ENCODE measurements at regions of chr4 and their contacts with region 1.

Region 1: DNA sequence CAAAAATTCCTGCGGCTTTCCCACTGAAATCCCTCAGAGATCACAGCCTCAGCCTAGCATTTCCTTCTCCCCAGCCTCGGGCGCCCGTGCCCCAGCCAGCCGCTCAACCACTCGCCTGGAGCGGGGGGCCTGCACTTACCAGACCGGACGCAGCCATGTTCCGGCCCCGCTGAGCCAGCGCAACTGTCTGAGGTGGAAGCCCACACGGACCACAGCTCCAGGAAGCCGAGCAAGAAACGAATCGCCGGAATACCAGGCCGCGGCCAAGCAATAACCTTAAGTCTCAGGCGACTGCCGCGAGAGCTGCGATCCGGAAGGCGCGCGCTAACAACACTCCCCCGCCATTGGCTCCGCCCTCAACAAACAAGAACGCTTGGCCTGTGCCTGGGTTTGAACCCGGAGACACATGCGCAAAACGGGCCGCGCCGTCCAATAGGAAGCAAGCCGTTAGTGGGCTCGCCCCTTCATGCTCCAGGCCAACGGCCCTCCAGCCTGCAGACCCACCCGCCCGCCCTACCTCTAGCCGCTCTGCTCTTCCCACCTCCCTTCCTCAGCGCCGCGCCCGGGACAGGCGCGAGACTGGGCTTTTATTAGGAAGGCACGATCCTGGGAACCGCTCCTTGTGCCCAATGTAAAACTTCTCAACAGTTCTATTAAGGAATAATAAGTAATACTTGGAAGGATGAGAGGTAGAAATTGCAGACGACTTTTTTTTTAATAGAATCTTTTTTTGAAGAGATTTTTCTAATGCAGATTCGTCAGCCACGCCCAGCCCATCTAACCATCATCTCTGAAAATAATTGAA is at the start of gene CENPC:
- DNase-seq: peak; percentile 97
- H3K4me3 Mint-ChIP-seq: peak within 1 kb of the TSS; percentile 96
- H3K27ac Mint-ChIP-seq: peak within 1 kb of the TSS; percentile 99
- H3K4me1 Mint-ChIP-seq: peaks cover 38% of the 10 kb centered on the region
- H3K27me3 Mint-ChIP-seq: no peaks in the 10 kb centered on the region
- total RNA-seq, gene CENPC: 46.0 to 51.7 TPM

Region 2: DNA sequence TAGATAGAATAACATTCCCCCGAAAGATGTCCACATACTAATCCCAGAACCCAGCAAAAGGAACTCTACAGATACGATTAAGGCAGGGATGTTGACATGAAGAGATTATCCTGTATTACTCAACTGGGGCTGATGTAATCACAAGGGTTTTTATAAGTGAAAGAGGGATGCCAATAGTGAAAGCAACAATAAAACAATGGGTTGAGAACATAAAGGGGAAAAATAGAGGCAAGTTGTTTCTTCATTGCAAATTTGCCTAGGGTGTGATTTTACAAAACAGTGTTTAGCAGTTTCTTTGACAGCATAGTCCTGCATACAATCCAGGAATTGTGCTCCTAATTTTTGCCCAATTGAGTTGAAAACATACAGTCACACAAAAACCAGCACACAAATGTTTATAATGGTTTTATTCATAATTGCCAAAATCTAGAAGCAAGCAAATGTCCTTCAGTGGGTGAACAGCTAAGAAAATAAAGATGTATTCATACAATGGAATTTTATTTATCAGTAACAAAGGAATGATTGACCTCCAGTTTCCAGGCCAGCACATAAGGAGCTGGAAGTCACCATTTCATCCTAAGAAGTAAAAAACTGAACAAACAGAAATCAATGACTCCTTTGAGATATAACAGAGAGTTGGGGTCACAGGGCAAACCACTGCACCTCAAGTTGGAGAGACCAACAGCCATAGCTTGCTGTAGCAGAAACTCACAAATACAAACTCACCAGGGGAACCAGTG is 107.3 kb before region 1 on chr4:
- CTCF ChIA-PET with region 1: no interaction called
- intact Hi-C with region 1: no loop called
- DNase-seq: no peak
- H3K4me3 Mint-ChIP-seq: no peak overlapping the region
- H3K27ac Mint-ChIP-seq: no peak overlapping the region
- H3K4me1 Mint-ChIP-seq: peaks cover 5% of the 10 kb centered on the region
- H3K27me3 Mint-ChIP-seq: no peaks in the 10 kb centered on the region

Region 3: GRCh38 chr4:67558493-67558892 is 13.1 kb after region 1 on chr4 and contains the start of gene STAP1:
- CTCF ChIA-PET with region 1: interaction called, 5 read pairs
- intact Hi-C with region 1: loop called (anchors 1 kb)
- DNase-seq: peak; percentile 65
- H3K4me3 Mint-ChIP-seq: peak within 1 kb of the TSS; percentile 86
- H3K27ac Mint-ChIP-seq: peak within 1 kb of the TSS; percentile 93
- H3K4me1 Mint-ChIP-seq: peaks cover 49% of the 10 kb centered on the region
- H3K27me3 Mint-ChIP-seq: no peaks in the 10 kb centered on the region
- total RNA-seq, gene STAP1: 18.9 to 22.1 TPM

Region 4: GRCh38 chr4:67700738-67701516 is 155.5 kb after region 1 on chr4 and contains the start of gene UBA6:
- CTCF ChIA-PET with region 1: interaction called, 3 read pairs
- intact Hi-C with region 1: loop called (anchors 1 kb)
- DNase-seq: peak; percentile 97
- H3K4me3 Mint-ChIP-seq: peak within 1 kb of the TSS; percentile 91
- H3K27ac Mint-ChIP-seq: peak within 1 kb of the TSS; percentile 96
- H3K4me1 Mint-ChIP-seq: peaks cover 48% of the 10 kb centered on the region
- H3K27me3 Mint-ChIP-seq: no peaks in the 10 kb centered on the region
- total RNA-seq, gene UBA6: 71.6 to 79.5 TPM

Region 5: DNA sequence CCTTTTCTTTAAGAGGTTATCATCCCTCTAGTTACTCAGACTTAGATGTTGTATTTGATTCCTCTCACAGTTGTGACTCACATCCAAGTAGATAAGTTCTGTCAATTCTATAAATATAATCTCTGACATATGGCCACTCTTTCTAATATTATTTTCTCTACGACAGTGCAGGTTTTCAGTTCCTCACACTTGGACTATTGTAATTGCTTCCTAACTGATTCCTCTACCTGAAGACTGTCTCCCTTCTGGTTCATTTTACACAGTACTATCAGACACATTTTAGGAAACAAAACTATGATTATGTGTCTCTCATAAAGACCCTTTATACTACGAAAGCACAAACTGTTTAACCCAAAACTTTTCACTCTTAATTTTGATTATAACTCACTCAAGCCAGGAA is 240.1 kb after region 1 on chr4:
- CTCF ChIA-PET with region 1: no interaction called
- intact Hi-C with region 1: no loop called
- DNase-seq: no peak
- H3K4me3 Mint-ChIP-seq: no peak overlapping the region
- H3K27ac Mint-ChIP-seq: no peak overlapping the region
- H3K4me1 Mint-ChIP-seq: no peaks in the 10 kb centered on the region
- H3K27me3 Mint-ChIP-seq: no peaks in the 10 kb centered on the region

Region 6: DNA sequence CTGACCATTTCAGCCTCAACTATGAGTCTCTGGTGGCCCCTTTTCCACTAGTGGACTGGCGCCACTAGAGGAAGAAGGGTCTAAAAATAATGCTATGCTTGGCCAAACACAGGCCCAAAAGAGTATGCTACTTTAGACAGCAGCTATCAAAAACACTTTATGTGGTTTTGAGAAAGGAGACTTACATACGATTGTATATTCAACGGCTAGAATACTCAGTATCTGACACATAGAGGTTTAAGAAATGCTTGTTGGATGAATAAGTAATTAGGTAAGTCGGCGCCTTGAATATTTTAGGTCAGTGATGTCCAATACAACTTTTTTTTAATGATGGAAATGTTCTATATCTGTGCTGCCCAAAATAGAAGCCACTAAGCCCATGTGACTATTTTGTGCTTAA is 443.6 kb after region 1 on chr4:
- CTCF ChIA-PET with region 1: no interaction called
- intact Hi-C with region 1: loop called (anchors 2 kb)
- DNase-seq: no peak
- H3K4me3 Mint-ChIP-seq: no peak overlapping the region
- H3K27ac Mint-ChIP-seq: no peak overlapping the region
- H3K4me1 Mint-ChIP-seq: peaks cover 2% of the 10 kb centered on the region
- H3K27me3 Mint-ChIP-seq: peaks cover 3% of the 10 kb centered on the region

Region 7: GRCh38 chr4:68349649-68350360 is 804.4 kb after region 1 on chr4 and contains the start of gene YTHDC1:
- CTCF ChIA-PET with region 1: no interaction called
- intact Hi-C with region 1: loop called (anchors 1 kb)
- DNase-seq: peak; percentile 98
- H3K4me3 Mint-ChIP-seq: peak within 1 kb of the TSS; percentile 97
- H3K27ac Mint-ChIP-seq: peak within 1 kb of the TSS; percentile 99
- H3K4me1 Mint-ChIP-seq: peaks cover 29% of the 10 kb centered on the region
- H3K27me3 Mint-ChIP-seq: no peaks in the 10 kb centered on the region
- total RNA-seq, gene YTHDC1: 76.3 to 81.0 TPM

Measured in activated naive CD4-positive, alpha-beta T cell treated with anti-CD3 and anti-CD28 coated beads for 36 hours (primary cell).